Psoas muscle (tissue), 8 donors: ENCODE measurements at regions of chr4 and their contacts with region 1.

Region 1: GRCh38 chr4:77240469-77241066 is 83.6 kb downstream of the CCNG2 start:
- DNase-seq: peak; percentile 31 to 67
- ATAC-seq: peak; percentile 56 to 68 (median 58)
- H3K4me3 ChIP-seq: no peak overlapping the region
- H3K27ac ChIP-seq: no peak overlapping the region
- H3K4me1 ChIP-seq: no peaks in the 10 kb centered on the region
- H3K27me3 ChIP-seq: no peaks in the 10 kb centered on the region
- CTCF ChIP-seq: peak; percentile 60

Region 2: GRCh38 chr4:75973766-75974165 is 1266.8 kb before region 1 on chr4:
- intact Hi-C with region 1: no loop called
- DNase-seq: no peak
- ATAC-seq: no peak
- H3K4me3 ChIP-seq: no peak overlapping the region
- H3K27ac ChIP-seq: no peak overlapping the region
- H3K4me1 ChIP-seq: no peaks in the 10 kb centered on the region
- H3K27me3 ChIP-seq: no peaks in the 10 kb centered on the region
- CTCF ChIP-seq: no peak

Region 3: DNA sequence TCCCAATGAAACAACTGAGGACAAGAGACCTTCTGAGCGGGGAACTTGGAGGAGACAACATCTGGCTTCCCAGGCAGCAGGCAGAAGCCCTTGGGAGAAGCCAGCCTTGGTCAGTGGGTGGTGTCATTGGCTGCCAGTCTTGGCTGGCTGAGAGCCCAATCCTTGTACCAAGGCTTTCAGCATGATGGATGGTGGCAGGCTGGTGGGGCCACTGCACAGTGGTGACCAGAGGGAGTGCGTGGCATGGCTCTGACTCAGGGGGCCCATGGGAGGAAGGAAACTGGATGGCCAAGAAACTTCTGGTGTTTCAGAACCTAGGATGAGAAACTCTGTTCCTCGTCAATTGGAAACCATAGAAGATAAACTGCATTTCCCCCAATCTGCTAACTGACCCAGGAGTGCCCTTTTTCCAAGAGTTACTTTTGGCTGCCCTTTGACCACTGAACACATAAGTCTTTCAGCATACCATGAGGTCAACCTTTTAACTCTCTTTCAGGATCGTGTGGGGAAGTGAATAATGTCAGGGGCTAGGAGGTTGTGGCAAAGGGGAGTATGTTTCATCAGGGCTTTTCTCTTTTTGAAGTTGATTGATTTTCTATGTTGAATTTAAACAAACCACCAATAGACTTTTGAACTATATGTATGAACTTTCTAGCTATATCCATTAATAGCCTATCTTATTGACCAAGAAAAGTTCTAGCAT is 403.6 kb before region 1 on chr4:
- intact Hi-C with region 1: no loop called
- DNase-seq: no peak
- ATAC-seq: no peak
- H3K4me3 ChIP-seq: no peak overlapping the region
- H3K27ac ChIP-seq: no peak overlapping the region
- H3K4me1 ChIP-seq: no peaks in the 10 kb centered on the region
- H3K27me3 ChIP-seq: no peaks in the 10 kb centered on the region
- CTCF ChIP-seq: no peak

Region 4: GRCh38 chr4:77358315-77358928 is 117.9 kb after region 1 on chr4:
- intact Hi-C with region 1: loop called in 1 of 2 experiments (anchors 2 kb)
- DNase-seq: no peak
- ATAC-seq: no peak
- H3K4me3 ChIP-seq: no peak overlapping the region
- H3K27ac ChIP-seq: no peak overlapping the region
- H3K4me1 ChIP-seq: no peaks in the 10 kb centered on the region
- H3K27me3 ChIP-seq: no peaks in the 10 kb centered on the region
- CTCF ChIP-seq: peak; percentile 46

Region 5: GRCh38 chr4:77433418-77433733 is 192.8 kb after region 1 on chr4:
- intact Hi-C with region 1: loop called in 1 of 2 experiments (anchors 5 kb)
- DNase-seq: no peak
- ATAC-seq: peak; percentile 57 to 87 (median 68)
- H3K4me3 ChIP-seq: no peak overlapping the region
- H3K27ac ChIP-seq: no peak overlapping the region
- H3K4me1 ChIP-seq: no peaks in the 10 kb centered on the region
- H3K27me3 ChIP-seq: no peaks in the 10 kb centered on the region
- CTCF ChIP-seq: peak; percentile 54